Activated CD8-positive, alpha-beta T cell treated with anti-CD3 and anti-CD28 coated beads, Interleukin-2, amount 10 ng/mL, durations not matched to agents 7 days and 5 days (primary cell): ENCODE measurements at regions of chr19 and their contacts with region 1.

Region 1: DNA sequence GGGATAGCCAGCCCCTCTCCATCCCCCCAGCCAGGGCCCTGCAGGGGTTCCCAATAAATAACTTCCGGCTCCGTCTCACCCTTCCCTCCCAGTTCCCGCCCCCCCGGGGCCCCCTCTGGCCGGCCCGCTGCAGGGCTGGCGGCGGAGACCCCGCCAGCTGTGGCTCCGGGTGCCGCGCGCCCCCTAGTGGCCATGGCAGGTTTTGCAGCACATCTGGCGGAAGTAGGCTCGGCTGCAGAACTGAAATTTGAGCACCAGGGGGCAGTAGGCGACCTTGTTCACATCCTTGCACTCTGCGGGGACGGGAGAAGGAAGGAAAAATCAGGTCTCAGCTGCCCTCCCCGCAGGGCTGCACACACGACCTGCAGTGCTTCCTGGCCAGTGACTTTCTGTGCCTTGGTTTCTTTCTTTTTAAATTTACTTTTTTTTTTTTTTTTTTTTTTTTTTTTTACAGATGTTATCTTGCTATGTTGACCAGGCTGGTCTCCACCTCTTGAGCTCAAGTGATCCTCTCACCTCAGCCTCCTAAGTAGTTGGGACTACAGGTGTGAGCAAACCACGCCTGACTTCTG is 3.6 kb upstream of the MYO1F start:
- DNase-seq: peak; percentile 91
- ATAC-seq: peak; percentile 52
- H3K4me3 Mint-ChIP-seq: no peak overlapping the region
- H3K27ac Mint-ChIP-seq: no peak overlapping the region
- H3K4me1 Mint-ChIP-seq: peaks cover 24% of the 10 kb centered on the region
- H3K27me3 Mint-ChIP-seq: peaks cover 4% of the 10 kb centered on the region

Region 2: GRCh38 chr19:8412783-8413628 is 167.8 kb before region 1 on chr19 and contains the start of gene MARCHF2:
- CTCF ChIA-PET with region 1: interaction called, 52 read pairs
- POLR2A ChIA-PET with region 1: interaction called, 3 read pairs
- DNase-seq: peak; percentile 96
- ATAC-seq: peak; percentile 100
- H3K4me3 Mint-ChIP-seq: peak within 1 kb of the TSS; percentile 60
- H3K27ac Mint-ChIP-seq: no peak within 1 kb of the TSS
- H3K4me1 Mint-ChIP-seq: peaks cover 13% of the 10 kb centered on the region
- H3K27me3 Mint-ChIP-seq: no peaks in the 10 kb centered on the region
- total RNA-seq, gene MARCHF2: 26.8 to 28.1 TPM

Region 3: GRCh38 chr19:8494158-8494557 is 86.6 kb before region 1 on chr19:
- CTCF ChIA-PET with region 1: interaction called, 24 read pairs
- POLR2A ChIA-PET with region 1: interaction called, 5 read pairs
- DNase-seq: peak; percentile 46
- ATAC-seq: peak; percentile 68
- H3K4me3 Mint-ChIP-seq: no peak overlapping the region
- H3K27ac Mint-ChIP-seq: peak overlapping the region; percentile 86
- H3K4me1 Mint-ChIP-seq: peaks cover 32% of the 10 kb centered on the region
- H3K27me3 Mint-ChIP-seq: no peaks in the 10 kb centered on the region

Region 4: GRCh38 chr19:8528500-8528899 is 52.3 kb before region 1 on chr19:
- CTCF ChIA-PET with region 1: interaction called, 11 read pairs
- POLR2A ChIA-PET with region 1: interaction called, 3 read pairs
- DNase-seq: no peak
- ATAC-seq: no peak
- H3K4me3 Mint-ChIP-seq: no peak overlapping the region
- H3K27ac Mint-ChIP-seq: peak overlapping the region; percentile 4
- H3K4me1 Mint-ChIP-seq: no peaks in the 10 kb centered on the region
- H3K27me3 Mint-ChIP-seq: no peaks in the 10 kb centered on the region

Region 5: DNA sequence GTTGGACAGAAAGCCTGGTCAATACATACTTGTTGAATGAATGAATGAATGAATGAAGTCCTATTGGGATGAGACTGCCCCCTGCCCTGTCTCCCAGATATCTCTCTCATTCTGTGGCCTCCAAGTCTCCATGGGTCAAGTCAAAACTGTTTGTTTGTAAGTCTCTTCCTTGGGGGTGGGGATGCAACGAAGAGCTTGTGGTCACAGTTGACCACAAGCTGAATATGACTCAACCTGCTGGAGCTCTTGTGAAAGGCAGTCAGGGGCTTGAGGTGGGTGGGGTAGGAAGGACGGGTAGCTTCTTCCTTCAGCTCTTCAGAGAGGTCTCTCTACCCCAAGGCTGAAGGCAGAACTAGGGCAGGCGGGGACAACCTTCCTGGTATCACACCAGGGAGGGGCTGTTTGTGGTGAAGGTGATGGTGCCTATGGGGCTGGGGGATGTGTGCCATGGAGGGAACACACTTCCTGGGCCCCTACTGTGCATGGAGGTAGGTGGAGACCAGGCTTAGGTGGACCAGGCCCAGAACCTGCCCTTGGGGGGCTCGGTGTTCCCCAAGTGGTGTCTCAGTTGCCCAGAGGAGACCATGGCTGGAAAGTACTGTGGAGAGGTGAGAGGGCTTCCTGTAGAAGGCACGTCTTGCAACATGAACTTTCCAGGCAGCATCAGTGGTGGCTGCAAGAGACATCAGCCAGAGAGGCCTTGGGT is 11.6 kb before region 1 on chr19:
- CTCF ChIA-PET with region 1: interaction called, 158 read pairs
- POLR2A ChIA-PET with region 1: interaction called, 7 read pairs
- DNase-seq: peak; percentile 91
- ATAC-seq: peak; percentile 86
- H3K4me3 Mint-ChIP-seq: peak overlapping the region; percentile 65
- H3K27ac Mint-ChIP-seq: peak overlapping the region; percentile 95
- H3K4me1 Mint-ChIP-seq: peaks cover 84% of the 10 kb centered on the region
- H3K27me3 Mint-ChIP-seq: no peaks in the 10 kb centered on the region

Region 6: DNA sequence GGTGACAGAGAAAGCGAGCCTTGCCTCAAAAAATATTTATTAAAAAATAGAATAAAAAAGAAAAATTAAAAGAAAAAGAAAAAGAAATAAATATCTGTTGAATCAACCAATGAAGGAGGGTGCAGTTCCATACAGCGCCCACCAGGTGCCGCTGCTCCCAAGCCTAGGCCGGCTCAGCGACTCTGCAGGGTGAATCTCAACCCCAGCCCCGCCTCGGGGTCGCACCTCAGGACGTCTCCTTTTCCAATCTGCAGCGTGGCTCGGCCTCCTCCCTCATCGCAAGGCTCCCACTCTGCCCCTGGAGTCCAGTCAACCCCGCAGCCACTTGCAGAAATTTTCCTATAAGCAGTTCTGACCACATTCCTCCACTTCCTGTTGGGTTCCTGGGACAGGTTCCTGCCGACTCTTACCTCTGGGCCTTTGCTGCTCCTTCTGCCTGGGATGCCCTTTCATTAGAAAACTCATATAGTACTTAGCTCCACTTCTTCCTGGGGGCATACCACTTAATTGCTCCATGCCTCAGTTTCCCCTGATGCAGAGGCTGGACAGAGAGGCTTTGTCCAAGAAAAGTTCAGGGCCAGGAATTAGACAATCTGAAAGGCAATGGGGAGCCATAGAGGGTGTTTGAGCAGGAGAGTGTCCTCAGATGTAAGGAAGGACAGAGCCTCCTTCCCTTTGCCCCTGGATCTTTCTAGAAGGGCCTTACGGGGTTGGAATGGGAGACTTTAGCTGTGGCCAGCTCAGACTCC is 74.0 kb after region 1 on chr19:
- CTCF ChIA-PET with region 1: interaction called, 11 read pairs
- POLR2A ChIA-PET with region 1: no interaction called
- DNase-seq: peak; percentile 80
- ATAC-seq: peak; percentile 70
- H3K4me3 Mint-ChIP-seq: peak overlapping the region; percentile 55
- H3K27ac Mint-ChIP-seq: peak overlapping the region; percentile 66
- H3K4me1 Mint-ChIP-seq: peaks cover 32% of the 10 kb centered on the region
- H3K27me3 Mint-ChIP-seq: peaks cover 24% of the 10 kb centered on the region